KBM-7 (cell line): ENCODE measurements at regions of chr1 and their contacts with region 1.

Region 1: GRCh38 chr1:232630047-232630893 is at the start of gene SIPA1L2:
- DNase-seq: peak; percentile 77

Region 2: DNA sequence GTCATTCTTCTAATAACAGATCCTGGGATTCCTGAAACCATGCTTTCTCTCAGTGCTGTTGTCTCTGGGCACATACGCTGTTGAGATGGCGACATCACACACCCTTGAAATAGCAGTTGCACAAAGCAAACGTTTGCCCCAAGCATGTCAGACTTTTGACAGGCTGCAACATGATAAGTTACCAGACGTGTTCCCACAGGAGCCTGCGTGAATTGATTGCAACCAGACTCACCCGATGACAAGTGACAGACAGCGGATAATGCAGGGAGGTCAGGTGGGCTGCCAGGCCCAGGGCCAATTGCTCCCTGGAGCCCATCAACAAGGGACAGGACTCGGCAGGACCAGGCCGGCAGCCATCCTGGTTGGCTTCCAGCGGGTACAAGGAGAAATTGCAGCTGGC is 311.2 kb before region 1 on chr1:
- in situ Hi-C with region 1: no loop called
- DNase-seq: no peak

Region 3: DNA sequence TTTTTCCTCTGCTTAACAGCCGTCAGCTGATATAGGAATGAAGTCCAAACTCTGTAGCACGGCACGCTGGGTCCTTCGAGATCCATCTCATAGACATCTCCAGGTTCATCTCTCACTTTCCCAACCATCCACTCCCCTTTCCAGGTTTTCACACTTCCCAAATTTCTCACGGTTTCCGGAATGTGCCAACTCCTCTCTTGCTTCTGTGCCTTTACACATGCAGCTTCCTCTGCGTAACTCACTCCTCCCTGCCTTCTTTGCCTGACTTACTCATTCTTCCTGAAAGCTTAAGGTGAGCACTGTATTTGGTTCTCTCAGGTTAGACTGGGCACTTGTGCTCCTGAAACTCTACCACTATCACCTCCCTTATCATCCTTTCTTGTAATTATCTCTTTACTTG is 496.9 kb after region 1 on chr1:
- in situ Hi-C with region 1: no loop called
- DNase-seq: no peak

Region 4: DNA sequence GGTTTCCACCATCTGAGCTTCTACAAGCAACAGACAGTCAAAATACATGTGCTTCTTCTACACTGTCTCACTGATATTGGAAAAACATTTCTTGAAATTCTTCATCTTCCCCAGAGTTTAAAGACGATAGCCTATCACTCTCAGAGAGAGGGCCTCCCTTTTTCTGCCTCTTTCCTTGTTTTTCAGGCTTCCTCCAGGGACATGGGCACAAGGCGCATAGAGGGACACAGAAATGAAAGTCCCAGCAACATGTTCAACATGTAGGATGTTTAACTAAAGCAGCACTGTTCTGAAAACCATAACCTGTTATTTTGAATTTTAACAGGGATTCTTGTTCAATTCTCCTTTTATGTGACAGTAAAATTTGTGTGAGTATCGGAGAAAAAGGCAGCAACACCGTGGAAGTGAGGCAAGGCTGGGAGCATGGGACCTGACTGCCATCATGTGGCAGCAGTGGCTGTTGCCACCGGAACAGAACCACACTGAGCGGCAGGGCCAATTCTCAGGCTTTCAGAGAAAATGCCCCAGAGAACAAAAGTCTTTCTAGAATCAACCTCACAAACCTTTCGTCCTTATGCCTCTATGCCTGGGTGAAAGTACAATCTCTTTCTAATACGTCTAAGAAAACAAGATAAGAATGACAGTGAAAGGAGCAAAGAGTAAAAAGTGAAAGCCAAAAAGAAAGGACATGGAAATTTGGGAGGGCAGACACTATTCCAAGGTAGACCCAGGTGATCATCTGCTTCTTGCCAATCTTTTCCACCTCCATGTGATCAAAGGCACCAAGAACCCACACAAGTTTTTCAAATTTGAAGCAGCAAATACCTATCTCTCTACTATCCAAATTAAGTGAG is 610.8 kb after region 1 on chr1:
- in situ Hi-C with region 1: loop called (anchors 25 kb)
- DNase-seq: peak; percentile 74